Heart left ventricle (tissue), 16 donors: ENCODE measurements at regions of chr2 and their contacts with region 1.

Region 1: GRCh38 chr2:64998658-64999061 is 9.5 kb downstream of the SLC1A4 start:
- DNase-seq: peak in 4 of 5 donors; percentile 27 to 52 (median 42)
- ATAC-seq: peak; percentile 57 to 87 (median 64)
- H3K4me3 ChIP-seq: peak overlapping the region in 1 of 12 donors; percentile 19
- H3K27ac ChIP-seq: peak overlapping the region; percentile 16 to 75 (median 56)
- H3K4me1 ChIP-seq: peaks cover 5 to 26% (median 17%) of the 10 kb centered on the region in 12 donors
- H3K27me3 ChIP-seq: no peaks in the 10 kb centered on the region
- CTCF ChIP-seq: no peak
- POLR2A ChIP-seq: no peak

Region 2: DNA sequence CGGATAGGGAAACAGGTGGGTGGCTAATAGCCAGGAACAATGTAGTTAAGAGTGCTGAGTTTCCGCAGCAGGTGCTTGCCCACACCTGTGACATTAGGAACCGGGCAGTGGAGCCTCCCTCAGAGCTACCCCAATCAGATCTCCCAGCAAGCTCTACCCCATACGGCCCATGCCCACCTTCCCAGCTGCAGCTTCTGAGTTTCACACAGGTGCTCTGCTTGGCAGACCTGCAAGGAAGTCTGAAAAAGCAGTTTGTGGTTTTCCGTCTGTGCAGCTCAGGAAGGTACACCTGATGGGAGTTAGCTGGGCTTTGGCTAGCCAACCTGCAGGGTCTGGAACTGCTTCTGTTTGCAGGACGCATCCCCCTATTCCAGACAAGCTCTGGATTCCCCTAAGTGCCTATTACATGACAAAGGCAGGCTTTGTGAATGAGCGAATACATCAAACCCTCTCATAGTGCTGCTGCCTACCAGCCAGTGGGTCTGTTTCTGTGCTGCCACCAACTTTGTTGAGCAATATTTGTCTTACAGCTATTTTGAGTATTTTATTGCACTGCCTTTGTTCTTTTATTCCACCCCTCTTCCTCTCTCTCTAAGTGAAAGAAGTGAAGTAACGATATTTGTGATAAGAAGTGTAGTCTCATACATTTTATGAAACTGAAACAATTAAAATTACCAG is 32.8 kb after region 1 on chr2:
- intact Hi-C with region 1: loop called in 1 of 10 experiments (anchors 5 kb)
- DNase-seq: no peak
- ATAC-seq: peak in 1 of 4 donors; percentile 15
- H3K4me3 ChIP-seq: no peak overlapping the region
- H3K27ac ChIP-seq: no peak overlapping the region
- H3K4me1 ChIP-seq: peaks cover 0 to 30% (median 8%) of the 10 kb centered on the region in 12 donors
- H3K27me3 ChIP-seq: no peaks in the 10 kb centered on the region
- CTCF ChIP-seq: no peak
- POLR2A ChIP-seq: no peak